ENCODE measurements at regions of chr18 and their contacts with region 1.

Region 1: GRCh38 chr18:12236934-12237832 is 17.0 kb upstream of the CIDEA start:
- DNase-seq: peak; percentile 55 to 57
- ATAC-seq: peak; percentile 98 to 100
- H3K4me3 ChIP-seq: no peak overlapping the region; the same call in 2 of the 3 replicates
- H3K27ac ChIP-seq: peak overlapping the region in 1 of 2 experiments; percentile 62; a peak in 1 of 6 replicates
- H3K4me1 ChIP-seq: no peaks in the 10 kb centered on the region
- CTCF ChIP-seq: peak; percentile 65
- EP300 ChIP-seq: no peak
- POLR2A ChIP-seq: no peak
- RAD21 ChIP-seq: peak; percentile 56 to 60

Region 2: DNA sequence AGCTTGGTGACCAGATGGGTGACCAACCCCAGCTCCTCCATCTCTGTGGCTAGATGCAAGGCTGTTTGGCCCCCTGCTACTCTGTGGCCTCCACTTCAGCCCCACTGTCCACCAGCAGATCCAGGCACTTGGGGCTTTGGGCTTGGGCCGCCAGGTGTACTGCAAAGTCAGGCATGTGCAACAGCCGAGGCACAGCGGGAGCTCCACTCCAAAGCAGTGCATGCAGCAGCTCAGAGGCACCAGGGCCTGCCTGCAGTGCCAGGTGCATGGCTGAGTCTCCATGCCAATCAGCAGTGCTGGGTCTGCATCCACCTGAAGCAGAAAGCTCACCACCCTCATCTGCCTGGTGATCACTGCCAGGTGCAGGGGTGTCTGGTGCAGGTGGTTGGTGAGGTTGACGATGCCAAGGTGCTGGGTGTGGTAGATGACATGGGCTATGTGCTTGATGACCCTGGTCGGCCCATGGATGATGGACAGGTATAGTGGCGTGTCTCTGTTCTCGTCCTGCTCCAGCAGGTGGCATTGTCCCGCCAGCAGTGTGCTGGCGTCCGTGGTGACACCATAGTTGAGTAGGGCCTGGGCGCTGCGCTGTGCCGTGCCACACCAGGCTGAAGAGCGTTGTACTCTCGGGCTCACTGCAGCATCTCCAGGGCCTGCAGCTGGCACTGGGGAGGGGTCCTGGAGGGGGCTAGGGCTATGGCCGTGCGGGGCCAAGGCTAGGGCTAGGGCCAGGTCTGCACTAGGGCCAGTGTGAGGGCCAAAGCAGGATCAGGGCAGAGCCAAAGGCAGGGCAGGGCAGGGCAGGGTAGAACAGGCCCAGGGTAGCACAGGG is 144.6 kb before region 1 on chr18:
- CTCF ChIA-PET with region 1: interaction called, 26 read pairs
- POLR2A ChIA-PET with region 1: no interaction called
- DNase-seq: peak; percentile 41 to 53
- ATAC-seq: peak; percentile 95 to 99
- H3K4me3 ChIP-seq: no peak overlapping the region
- H3K27ac ChIP-seq: peak overlapping the region in 1 of 2 experiments; percentile 64; a peak in 1 of 6 replicates
- H3K4me1 ChIP-seq: no peaks in the 10 kb centered on the region
- CTCF ChIP-seq: peak; percentile 53
- EP300 ChIP-seq: no peak
- POLR2A ChIP-seq: no peak
- RAD21 ChIP-seq: peak; percentile 74